Activated CD4-positive, alpha-beta T cell treated with anti-CD3 and anti-CD28 coated beads, Interleukin-2, amount 10 ng/mL, durations not matched to agents 24 days and 14 days (primary cell): ENCODE measurements at regions of chr6 and their contacts with region 1.

Region 1: DNA sequence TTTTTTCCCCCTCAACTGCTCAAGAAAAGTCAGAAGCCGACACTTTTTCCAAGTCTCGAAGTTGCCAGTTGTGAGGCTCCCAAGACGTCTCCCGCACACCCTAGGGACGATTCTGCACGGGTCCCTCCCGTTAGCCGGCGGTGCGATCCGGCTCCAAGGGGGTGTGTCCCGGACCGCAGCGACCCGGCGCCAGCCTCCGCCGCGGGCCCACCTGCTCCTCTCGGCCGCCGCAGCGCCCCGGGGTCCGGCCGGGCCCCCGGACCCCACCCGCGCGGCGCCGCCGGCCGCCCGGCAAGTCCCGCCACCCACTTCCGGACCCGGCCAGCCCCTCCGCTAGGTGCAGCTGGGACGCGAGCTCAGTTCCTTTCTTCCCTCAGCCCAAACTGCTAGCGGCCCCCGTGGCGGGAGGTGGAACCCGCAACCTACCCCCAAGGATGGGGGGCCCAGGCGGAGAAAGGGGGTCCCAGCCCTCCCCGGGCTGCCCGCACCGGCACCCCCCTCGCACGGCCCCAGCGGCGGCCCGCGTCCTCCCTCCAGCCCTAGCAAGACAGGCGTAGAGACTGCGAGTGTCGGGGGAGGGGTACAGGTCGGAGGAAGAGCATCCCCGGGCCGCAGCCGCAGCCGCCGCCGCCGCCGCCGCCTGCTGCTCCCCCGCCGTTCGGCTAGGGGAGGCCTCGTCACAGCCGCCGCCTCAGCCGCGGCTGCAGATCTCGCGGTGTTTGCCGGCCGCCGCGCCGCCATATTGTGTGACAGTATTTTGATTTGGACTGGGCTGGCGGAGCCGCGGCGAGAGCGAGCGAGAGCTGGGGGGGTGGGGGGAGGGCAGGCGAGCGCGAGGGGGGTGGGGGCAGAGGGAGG is 485 bp upstream of the TAB2 start:
- DNase-seq: peak; percentile 97
- H3K4me3 Mint-ChIP-seq: peak overlapping the region; percentile 91
- H3K27ac Mint-ChIP-seq: peak overlapping the region; percentile 92
- H3K4me1 Mint-ChIP-seq: peaks cover 35% of the 10 kb centered on the region
- H3K27me3 Mint-ChIP-seq: no peaks in the 10 kb centered on the region

Region 2: GRCh38 chr6:149082286-149082707 is 234.7 kb before region 1 on chr6:
- intact Hi-C with region 1: loop called (anchors 2 kb)
- DNase-seq: peak; percentile 96
- H3K4me3 Mint-ChIP-seq: peak overlapping the region; percentile 69
- H3K27ac Mint-ChIP-seq: peak overlapping the region; percentile 92
- H3K4me1 Mint-ChIP-seq: peaks cover 76% of the 10 kb centered on the region
- H3K27me3 Mint-ChIP-seq: no peaks in the 10 kb centered on the region

Region 3: DNA sequence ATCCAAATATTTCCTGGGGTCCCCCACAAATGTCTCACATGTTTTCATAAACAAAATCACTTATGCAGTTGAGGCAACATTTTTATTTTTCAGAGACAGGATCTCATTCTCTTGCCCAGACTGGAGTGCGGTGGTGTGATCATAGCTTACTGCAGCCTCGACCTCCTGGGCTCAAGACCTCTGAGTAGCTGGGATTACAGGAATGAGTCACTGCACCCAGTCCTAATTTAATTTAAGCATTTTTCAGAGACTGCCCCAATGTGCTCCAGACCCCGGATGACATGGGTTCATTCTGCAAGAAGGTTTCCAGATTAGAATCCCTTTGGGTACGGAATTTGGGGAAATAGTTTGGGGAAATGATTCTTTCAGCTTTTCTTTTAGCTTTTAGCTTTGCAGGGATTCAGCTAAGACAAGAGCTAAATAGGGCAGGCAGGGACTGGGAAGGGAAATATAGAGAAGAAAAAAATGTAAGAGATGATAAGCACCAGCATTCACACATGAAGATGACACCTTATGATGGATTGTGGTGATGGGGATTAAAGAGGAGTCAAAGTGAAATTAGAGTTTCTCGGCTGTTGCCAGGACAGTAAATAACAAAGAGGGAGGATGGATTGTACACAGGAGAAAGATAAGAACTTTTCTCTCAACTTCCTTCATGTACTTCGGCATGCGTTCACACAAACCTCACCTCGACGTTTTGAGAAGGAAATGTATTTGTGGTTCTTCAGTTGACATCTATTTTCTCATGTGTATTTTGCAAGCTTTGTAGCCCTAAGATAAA is 168.9 kb before region 1 on chr6:
- intact Hi-C with region 1: loop called (anchors 1 kb)
- DNase-seq: peak; percentile 85
- H3K4me3 Mint-ChIP-seq: peak overlapping the region; percentile 70
- H3K27ac Mint-ChIP-seq: peak overlapping the region; percentile 94
- H3K4me1 Mint-ChIP-seq: peaks cover 80% of the 10 kb centered on the region
- H3K27me3 Mint-ChIP-seq: no peaks in the 10 kb centered on the region

Region 4: DNA sequence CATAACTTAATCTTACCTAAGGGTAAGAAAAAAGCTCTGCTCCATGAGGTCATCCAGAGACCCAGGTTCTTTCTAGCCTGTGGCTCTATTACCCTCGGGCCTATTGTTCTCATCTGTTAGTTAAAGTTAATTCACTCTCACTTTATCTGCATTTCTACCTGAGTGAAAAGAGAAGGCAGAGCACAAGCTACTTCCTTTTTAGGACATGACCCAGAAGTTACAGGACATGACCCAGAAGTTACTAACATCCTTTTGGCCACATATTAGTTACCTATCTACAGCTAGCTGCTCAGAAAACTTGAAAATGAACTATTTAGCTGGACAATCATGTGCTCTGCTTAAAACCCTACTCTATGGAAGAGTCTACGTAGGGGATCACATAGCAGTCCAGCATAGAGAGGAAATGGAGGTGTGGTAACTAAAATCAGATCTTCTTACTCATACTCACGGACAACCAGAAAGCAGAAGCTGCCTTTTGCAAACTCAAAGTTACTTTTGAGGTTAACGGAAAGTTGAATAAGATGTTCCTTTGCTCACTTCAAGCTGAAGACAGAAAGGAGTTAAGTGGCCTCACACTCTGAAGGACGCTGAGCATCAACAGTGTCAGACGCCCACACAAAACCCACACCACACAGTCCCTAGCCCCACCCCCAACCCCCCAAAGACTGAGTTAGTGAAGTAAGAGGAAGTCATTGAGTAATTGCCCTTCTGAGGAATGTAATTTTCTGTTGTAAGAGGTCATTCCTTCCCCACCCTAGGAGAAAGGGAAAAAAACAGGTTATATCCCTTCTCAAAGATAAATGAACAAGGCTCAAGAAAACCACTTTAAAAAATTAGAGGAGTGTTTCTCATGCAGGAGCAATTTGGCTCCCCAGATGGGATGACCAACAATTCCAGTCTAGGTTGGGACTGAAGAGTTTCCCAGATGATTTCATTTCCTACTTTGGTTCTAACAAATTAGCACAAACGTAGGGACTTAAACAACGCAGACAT is 45.4 kb before region 1 on chr6:
- intact Hi-C with region 1: loop called (anchors 2 kb)
- DNase-seq: peak; percentile 74
- H3K4me3 Mint-ChIP-seq: peak overlapping the region; percentile 60
- H3K27ac Mint-ChIP-seq: peak overlapping the region; percentile 94
- H3K4me1 Mint-ChIP-seq: peaks cover 37% of the 10 kb centered on the region
- H3K27me3 Mint-ChIP-seq: no peaks in the 10 kb centered on the region

Region 5: DNA sequence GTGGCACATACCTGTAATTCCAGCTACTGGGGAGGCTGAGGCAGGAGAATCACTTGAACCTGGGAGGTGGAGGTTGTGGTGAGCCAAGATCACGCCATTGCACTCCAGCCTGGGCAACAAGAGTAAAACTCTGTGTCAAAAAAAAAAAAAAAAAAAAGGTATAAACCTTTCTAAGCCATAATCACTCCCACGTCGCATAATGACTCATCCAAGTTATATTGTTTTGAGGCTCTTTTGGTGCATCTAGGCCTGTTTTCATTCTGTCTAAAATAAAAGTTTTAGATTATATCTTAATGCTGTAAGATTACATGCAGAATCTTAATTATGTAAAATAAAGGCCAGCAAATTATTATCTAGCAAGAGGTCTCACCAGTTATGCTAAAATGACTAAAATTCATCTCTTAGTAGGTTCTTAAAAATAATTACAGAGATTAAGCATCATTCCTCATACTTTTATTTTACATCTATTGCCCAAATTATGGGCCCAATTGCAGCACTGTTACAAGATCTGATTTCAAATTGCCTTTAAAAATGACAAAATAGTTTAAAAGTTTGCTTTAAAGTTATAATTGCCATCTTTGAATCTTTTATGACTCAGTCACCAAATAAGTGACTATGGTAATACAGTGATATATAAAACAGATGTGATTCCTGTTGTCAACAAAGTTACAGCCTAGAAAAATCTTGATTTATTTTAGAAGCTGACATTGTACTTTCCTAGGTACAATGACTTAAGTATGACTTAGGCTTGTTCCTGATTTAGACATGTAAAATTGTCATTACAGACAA is 72.7 kb after region 1 on chr6:
- intact Hi-C with region 1: loop called (anchors 2 kb)
- DNase-seq: no peak
- H3K4me3 Mint-ChIP-seq: no peak overlapping the region
- H3K27ac Mint-ChIP-seq: peak overlapping the region; percentile 46
- H3K4me1 Mint-ChIP-seq: peaks cover 60% of the 10 kb centered on the region
- H3K27me3 Mint-ChIP-seq: no peaks in the 10 kb centered on the region